CD4-positive, alpha-beta T cell (primary cell): ENCODE measurements at regions of chr20 and their contacts with region 1.

Region 1: GRCh38 chr20:53594068-53595017 is 704 bp upstream of the ZNF217 start:
- DNase-seq: peak; percentile 95 to 100 (median 98)
- ATAC-seq: peak; percentile 63
- H3K4me3 ChIP-seq: peak overlapping the region; percentile 75
- H3K4me3 Mint-ChIP-seq: peak overlapping the region; percentile 93
- H3K27ac ChIP-seq: peak overlapping the region; percentile 63 to 74
- H3K27ac Mint-ChIP-seq: peak overlapping the region; percentile 100
- H3K4me1 ChIP-seq: peaks cover 24% of the 10 kb centered on the region
- H3K4me1 Mint-ChIP-seq: peaks cover 73% of the 10 kb centered on the region
- H3K27me3 ChIP-seq: no peaks in the 10 kb centered on the region
- H3K27me3 Mint-ChIP-seq: no peaks in the 10 kb centered on the region
- CTCF ChIP-seq: no peak

Region 2: DNA sequence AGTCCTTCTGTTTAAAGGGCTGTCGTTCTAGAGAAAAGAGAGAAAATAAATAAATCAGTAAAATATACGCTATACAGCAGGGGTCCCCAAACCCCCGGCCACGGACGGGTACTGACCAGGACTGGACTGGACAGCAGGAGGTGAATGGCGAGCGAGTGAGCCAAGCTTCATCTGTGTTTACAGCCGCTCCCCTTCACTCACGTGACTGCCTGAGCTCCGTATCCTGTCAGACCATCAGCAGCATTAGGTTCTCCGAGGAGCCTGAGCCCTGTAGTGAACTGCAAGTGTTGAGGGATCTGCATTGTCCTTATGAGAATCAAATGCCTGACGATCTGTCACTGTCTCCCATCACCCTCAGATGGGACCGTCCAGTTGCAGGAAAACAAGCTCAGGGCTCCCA is 77.2 kb before region 1 on chr20:
- CTCF ChIA-PET with region 1: no interaction called
- POLR2A ChIA-PET with region 1: no interaction called
- intact Hi-C with region 1: no loop called
- DNase-seq: no peak
- ATAC-seq: no peak
- H3K4me3 ChIP-seq: no peak overlapping the region
- H3K4me3 Mint-ChIP-seq: no peak overlapping the region
- H3K27ac ChIP-seq: no peak overlapping the region
- H3K27ac Mint-ChIP-seq: no peak overlapping the region
- H3K4me1 ChIP-seq: no peaks in the 10 kb centered on the region
- H3K4me1 Mint-ChIP-seq: no peaks in the 10 kb centered on the region
- H3K27me3 ChIP-seq: no peaks in the 10 kb centered on the region
- H3K27me3 Mint-ChIP-seq: no peaks in the 10 kb centered on the region
- CTCF ChIP-seq: no peak

Region 3: DNA sequence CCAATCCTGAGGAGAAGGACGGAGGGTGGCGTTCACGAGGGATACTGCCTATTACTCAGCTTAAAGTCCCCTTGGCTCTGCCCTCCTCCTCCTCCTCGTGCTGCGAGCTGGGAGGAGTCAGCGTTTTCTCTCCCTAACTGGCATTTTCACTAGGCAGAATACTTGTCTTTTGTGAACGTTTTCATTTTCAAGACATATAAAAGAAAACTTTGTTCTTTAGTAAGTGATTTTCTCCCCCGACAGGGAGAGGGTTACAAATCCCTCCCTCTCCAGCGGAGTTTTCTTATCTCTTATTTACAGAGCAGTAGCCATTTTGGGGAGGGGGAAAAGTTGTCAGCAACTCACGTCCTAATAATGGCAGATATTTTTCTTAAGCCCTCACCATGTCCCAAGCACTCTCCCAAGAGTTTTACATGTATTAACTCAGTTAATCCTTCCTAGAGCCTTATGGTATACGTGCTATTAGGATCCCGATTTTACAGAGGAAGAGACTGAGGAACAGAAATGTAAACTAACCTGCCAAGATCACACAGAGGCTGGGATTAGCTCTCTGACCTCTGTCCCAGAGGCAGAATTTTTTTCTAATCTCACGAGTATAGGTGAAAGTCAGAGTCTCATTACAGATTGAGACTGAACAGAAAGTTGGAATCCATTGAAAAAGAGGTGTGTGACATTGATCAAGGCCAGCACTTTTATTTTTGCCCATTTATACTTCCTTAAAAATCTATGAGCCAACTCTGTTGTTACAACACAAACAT is 29.3 kb after region 1 on chr20:
- CTCF ChIA-PET with region 1: interaction called, 3 read pairs
- POLR2A ChIA-PET with region 1: interaction called, 36 read pairs
- intact Hi-C with region 1: no loop called
- DNase-seq: peak in 9 of 14 experiments; percentile 20 to 75 (median 41)
- ATAC-seq: peak; percentile 78
- H3K4me3 ChIP-seq: peak overlapping the region; percentile 57
- H3K4me3 Mint-ChIP-seq: peak overlapping the region; percentile 82
- H3K27ac ChIP-seq: peak overlapping the region; percentile 58 to 81
- H3K27ac Mint-ChIP-seq: peak overlapping the region; percentile 92
- H3K4me1 ChIP-seq: peaks cover 34% of the 10 kb centered on the region
- H3K4me1 Mint-ChIP-seq: peaks cover 37% of the 10 kb centered on the region
- H3K27me3 ChIP-seq: no peaks in the 10 kb centered on the region
- H3K27me3 Mint-ChIP-seq: no peaks in the 10 kb centered on the region
- CTCF ChIP-seq: no peak

Region 4: GRCh38 chr20:53643031-53643832 is 48.9 kb after region 1 on chr20:
- CTCF ChIA-PET with region 1: interaction called, 4 read pairs
- POLR2A ChIA-PET with region 1: interaction called, 45 read pairs
- intact Hi-C with region 1: loop called in 1 of 2 experiments (anchors 2 kb)
- DNase-seq: peak; percentile 54 to 88 (median 68)
- ATAC-seq: peak; percentile 96
- H3K4me3 ChIP-seq: peak overlapping the region; percentile 18
- H3K4me3 Mint-ChIP-seq: peak overlapping the region; percentile 84
- H3K27ac ChIP-seq: peak overlapping the region; percentile 83 to 85
- H3K27ac Mint-ChIP-seq: peak overlapping the region; percentile 93
- H3K4me1 ChIP-seq: peaks cover 38% of the 10 kb centered on the region
- H3K4me1 Mint-ChIP-seq: peaks cover 53% of the 10 kb centered on the region
- H3K27me3 ChIP-seq: no peaks in the 10 kb centered on the region
- H3K27me3 Mint-ChIP-seq: no peaks in the 10 kb centered on the region
- CTCF ChIP-seq: no peak

Region 5: DNA sequence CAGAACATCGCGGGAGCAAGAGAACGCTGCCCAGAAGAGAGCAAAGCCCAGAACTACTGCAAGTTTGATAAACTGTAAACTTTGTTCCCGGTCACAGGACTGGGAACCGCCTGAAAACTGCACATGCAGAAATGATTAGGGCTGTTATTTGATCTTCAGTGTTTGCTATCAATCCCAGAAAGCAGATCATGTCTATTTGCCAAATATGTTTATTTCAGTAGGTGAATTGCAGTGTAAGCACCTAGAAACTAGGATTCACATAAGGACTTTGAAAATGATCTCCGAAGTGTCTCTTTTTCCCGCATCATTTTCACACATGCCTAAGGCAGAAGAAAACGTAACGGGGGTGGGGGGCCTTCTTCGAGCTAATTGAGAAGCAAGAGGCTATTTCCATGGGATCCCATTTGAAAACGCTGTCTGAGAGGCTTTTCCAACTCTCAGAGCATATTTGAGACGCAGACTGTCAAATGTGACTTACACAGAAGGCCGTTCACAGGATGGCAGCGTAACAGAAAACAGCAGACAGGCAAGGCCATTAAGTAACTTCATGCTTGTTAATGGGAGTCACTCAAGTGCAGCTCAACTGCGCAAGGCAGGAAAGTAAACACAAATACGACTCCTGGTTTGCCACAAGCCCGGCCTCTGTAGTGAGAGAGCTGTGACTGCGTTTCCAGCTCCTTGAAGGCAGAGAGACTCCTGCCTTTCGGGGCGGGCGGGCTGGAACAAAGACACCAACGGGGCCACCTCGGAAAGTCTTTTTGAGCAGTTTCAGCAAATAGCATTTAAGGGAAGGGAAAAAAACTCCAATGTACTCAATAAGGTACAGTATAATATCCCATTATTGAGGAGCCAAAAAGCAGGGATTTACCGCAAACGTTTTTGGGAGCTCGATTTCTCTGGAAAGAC is 143.9 kb after region 1 on chr20:
- CTCF ChIA-PET with region 1: interaction called, 3 read pairs
- POLR2A ChIA-PET with region 1: interaction called, 11 read pairs
- intact Hi-C with region 1: no loop called
- DNase-seq: no peak
- ATAC-seq: no peak
- H3K4me3 ChIP-seq: no peak overlapping the region
- H3K4me3 Mint-ChIP-seq: no peak overlapping the region
- H3K27ac ChIP-seq: no peak overlapping the region
- H3K27ac Mint-ChIP-seq: no peak overlapping the region
- H3K4me1 ChIP-seq: peaks cover 19% of the 10 kb centered on the region
- H3K4me1 Mint-ChIP-seq: peaks cover 54% of the 10 kb centered on the region
- H3K27me3 ChIP-seq: no peaks in the 10 kb centered on the region
- H3K27me3 Mint-ChIP-seq: no peaks in the 10 kb centered on the region
- CTCF ChIP-seq: no peak

Region 6: DNA sequence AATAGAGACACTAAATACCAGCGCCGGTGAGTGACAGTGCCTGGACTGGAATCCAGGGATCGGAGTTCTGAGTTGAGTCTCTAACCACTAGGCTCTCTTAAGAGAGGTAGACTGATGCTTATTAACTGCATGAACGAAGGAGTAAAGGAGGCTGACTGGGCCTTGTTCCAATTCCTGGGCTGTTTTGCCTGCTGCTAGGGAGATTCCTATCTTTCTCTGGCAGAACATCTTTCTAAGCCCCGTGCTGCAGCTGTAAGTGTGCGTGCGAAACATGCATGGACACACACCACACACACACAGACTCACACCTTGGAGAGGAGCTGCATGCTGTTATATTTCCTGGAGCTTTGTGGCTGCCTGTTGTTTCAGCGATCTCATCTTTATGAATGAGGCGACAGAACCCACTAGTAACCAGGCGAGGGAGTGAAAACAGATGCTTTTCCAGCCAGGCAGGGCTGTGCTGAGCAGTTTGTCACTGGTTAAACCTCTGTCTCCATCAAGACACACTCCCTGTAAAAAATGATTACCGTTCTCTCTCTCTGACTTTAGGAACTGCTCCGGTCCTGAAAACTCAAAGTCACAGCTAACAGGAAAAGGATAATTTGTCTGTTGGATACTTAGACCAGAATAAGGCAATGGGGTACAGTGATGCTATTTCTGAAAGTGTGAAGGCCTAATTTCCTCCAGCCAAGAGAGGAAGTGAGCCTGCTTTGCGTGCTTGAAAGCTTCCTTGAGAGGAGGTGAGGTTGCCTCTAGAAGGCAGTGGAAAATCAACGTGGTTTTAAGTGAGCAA is 156.7 kb after region 1 on chr20:
- CTCF ChIA-PET with region 1: no interaction called
- POLR2A ChIA-PET with region 1: interaction called, 6 read pairs
- intact Hi-C with region 1: loop called in 1 of 2 experiments (anchors 5 kb)
- DNase-seq: peak in 8 of 14 experiments; percentile 2 to 75 (median 34)
- ATAC-seq: peak; percentile 57
- H3K4me3 ChIP-seq: no peak overlapping the region
- H3K4me3 Mint-ChIP-seq: peak overlapping the region; percentile 65
- H3K27ac ChIP-seq: peak overlapping the region; percentile 53 to 74
- H3K27ac Mint-ChIP-seq: peak overlapping the region; percentile 93
- H3K4me1 ChIP-seq: peaks cover 60% of the 10 kb centered on the region
- H3K4me1 Mint-ChIP-seq: peaks cover 76% of the 10 kb centered on the region
- H3K27me3 ChIP-seq: no peaks in the 10 kb centered on the region
- H3K27me3 Mint-ChIP-seq: no peaks in the 10 kb centered on the region
- CTCF ChIP-seq: no peak